ENCODE measurements at regions of chr13 and their contacts with region 1.

Region 1: DNA sequence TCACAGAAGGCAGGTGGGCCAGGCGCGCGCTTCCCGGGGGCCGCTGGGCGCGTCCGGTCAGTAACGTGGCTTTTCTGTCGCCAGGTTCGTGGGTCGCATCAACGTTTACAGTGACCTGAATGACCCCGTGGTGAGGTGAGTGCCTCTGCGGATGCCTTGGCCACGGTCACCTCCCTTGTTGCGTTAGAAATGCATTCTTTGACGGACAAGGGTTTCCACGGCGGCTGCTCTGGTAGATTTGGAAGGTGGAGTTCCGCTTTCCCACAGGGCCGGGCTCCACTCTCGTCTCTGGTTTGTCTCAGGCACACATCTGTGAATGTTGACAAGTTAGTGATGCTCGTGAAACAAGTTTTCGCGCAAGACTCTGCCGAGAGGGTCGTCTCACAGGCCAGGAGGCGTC is 130.0 kb downstream of the ATP11A start:
- DNase-seq: no peak
- H3K4me3 ChIP-seq: no peak overlapping the region
- H3K27ac ChIP-seq: no peak overlapping the region
- H3K4me1 ChIP-seq: no peaks in the 10 kb centered on the region
- H3K27me3 ChIP-seq: no peaks in the 10 kb centered on the region
- CTCF ChIP-seq: no peak
- EP300 ChIP-seq: no peak
- POLR2A ChIP-seq: no peak

Region 2: GRCh38 chr13:112781881-112782361 is 37.9 kb before region 1 on chr13:
- intact Hi-C with region 1: loop called in 1 of 4 experiments (anchors 1 kb)
- DNase-seq: peak in 1 of 5 donors; percentile 40
- H3K4me3 ChIP-seq: no peak overlapping the region
- H3K27ac ChIP-seq: no peak overlapping the region
- H3K4me1 ChIP-seq: peaks cover 16% of the 10 kb centered on the region
- H3K27me3 ChIP-seq: no peaks in the 10 kb centered on the region
- CTCF ChIP-seq: no peak
- EP300 ChIP-seq: no peak
- POLR2A ChIP-seq: no peak